Transverse colon (tissue), 4 donors: ENCODE measurements at regions of chr2 and their contacts with region 1.

Region 1: DNA sequence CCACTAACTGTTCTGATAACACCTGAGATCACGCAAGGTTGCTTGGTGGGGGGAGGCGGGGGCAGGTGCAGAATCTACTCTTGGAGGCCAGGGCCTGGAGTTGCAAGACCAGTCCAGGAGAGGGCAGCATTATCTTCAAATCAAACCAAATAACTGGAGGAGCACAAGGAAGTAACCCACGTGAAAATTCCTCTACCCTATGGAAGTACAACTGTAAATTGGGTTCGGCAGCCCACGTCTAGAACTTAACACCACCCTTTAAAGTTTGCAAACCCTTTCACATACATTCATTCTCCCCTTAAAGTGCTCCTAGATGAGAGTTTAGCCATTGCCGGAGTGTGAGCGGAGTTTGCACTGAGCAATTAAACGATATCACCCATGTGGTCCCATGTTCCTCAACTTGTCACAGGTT is 19.6 kb upstream of the CXCR1 start:
- DNase-seq: peak; percentile 83
- H3K4me3 ChIP-seq: no peak overlapping the region
- H3K27ac ChIP-seq: peak overlapping the region; percentile 34 to 79 (median 62)
- H3K4me1 ChIP-seq: peaks cover 6 to 17% (median 11%) of the 10 kb centered on the region in 4 donors
- H3K27me3 ChIP-seq: no peaks in the 10 kb centered on the region
- CTCF ChIP-seq: peak; percentile 85 to 91 (median 86)
- EP300 ChIP-seq: no peak
- POLR2A ChIP-seq: no peak

Region 2: DNA sequence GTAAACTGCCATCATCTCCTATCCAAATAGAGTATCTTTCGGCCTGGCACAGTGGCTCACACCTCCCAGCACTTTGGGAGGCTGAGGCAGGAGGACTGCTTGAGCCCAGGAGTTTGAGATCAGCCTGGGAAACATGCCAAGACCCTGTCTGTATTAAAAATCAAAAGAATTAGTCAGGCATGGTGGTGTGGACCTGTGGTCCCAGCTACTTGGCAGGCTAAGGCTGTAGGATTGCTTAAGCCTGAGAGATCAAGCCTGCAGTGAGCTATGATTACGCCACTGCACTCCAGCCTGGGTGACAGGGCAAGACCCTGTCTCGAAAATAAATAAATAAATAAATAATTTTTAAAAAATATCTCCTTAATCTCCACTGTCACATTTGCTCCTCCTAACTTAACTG is 15.9 kb after region 1 on chr2:
- in situ Hi-C with region 1: no loop called
- intact Hi-C with region 1: no loop called
- DNase-seq: no peak
- H3K4me3 ChIP-seq: no peak overlapping the region
- H3K27ac ChIP-seq: no peak overlapping the region
- H3K4me1 ChIP-seq: no peaks in the 10 kb centered on the region
- H3K27me3 ChIP-seq: no peaks in the 10 kb centered on the region
- CTCF ChIP-seq: no peak
- EP300 ChIP-seq: no peak
- POLR2A ChIP-seq: no peak

Region 3: GRCh38 chr2:218257390-218257981 is 71.1 kb after region 1 on chr2:
- in situ Hi-C with region 1: loop called in 1 of 4 experiments (anchors 5 kb)
- intact Hi-C with region 1: loop called (anchors 5 kb)
- DNase-seq: peak; percentile 31
- H3K4me3 ChIP-seq: no peak overlapping the region
- H3K27ac ChIP-seq: peak overlapping the region; percentile 14 to 87 (median 38)
- H3K4me1 ChIP-seq: peaks cover 36 to 43% (median 41%) of the 10 kb centered on the region in 4 donors
- H3K27me3 ChIP-seq: no peaks in the 10 kb centered on the region
- CTCF ChIP-seq: peak; percentile 32 to 70 (median 53)
- EP300 ChIP-seq: no peak
- POLR2A ChIP-seq: no peak

Region 4: DNA sequence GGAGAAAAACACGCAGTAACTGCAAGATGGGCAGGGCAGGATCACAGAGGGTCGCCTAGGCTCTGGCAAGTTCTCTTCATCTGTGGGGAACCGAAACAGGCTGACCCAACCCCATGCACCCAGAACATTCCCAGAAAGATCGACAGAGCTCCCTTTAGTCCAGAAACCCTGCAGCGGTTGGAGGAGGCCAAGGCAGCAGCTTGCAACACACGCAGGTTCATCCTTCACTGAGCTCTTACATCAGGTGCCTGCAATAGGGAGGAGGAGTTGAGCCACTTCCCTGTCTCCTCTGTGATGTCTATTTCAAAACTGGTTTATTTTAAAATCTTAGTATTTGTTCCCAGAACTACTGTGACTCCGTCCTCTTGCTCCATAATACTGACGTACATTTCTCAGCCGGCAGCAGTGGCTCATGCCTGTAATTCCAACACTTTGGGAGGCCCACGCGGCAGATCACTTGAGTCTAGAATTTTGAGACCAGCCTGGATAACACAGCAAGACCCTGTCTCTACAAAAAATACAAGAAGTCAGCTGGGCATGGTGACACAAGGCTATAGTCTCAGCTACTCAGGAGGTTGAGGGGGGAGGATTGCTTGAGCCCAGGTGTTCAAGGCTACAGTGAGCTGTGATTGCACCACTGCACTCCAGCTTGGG is 184.2 kb after region 1 on chr2:
- in situ Hi-C with region 1: loop called in 2 of 4 experiments (anchors 25 kb)
- intact Hi-C with region 1: loop called (anchors 10 kb)
- DNase-seq: peak; percentile 46
- H3K4me3 ChIP-seq: no peak overlapping the region
- H3K27ac ChIP-seq: peak overlapping the region; percentile 82 to 95 (median 93)
- H3K4me1 ChIP-seq: peaks cover 4 to 27% (median 15%) of the 10 kb centered on the region in 4 donors
- H3K27me3 ChIP-seq: no peaks in the 10 kb centered on the region
- CTCF ChIP-seq: no peak
- EP300 ChIP-seq: peak; percentile 44
- POLR2A ChIP-seq: no peak